SK-N-SH (cell line): ENCODE measurements at regions of chr4 and their contacts with region 1.

Region 1: GRCh38 chr4:109815151-109816081 is at the start of gene GAR1:
- DNase-seq: peak; percentile 88
- H3K4me3 ChIP-seq: peak within 1 kb of the TSS; percentile 91 to 100
- H3K27ac ChIP-seq: peak within 1 kb of the TSS; percentile 88 to 94
- H3K4me1 ChIP-seq: peaks cover 5 to 11% of the 10 kb centered on the region in 2 experiments; a peak in 3 of 4 replicates
- H3K27me3 ChIP-seq: no peaks in the 10 kb centered on the region
- CTCF ChIP-seq: no peak
- EP300 ChIP-seq: peak in 1 of 2 experiments; percentile 28; a peak in 1 of 4 replicates
- RAD21 ChIP-seq: no peak
- polyA plus RNA-seq, gene GAR1: 37.5 and 40.5 TPM in 2 replicates

Region 2: GRCh38 chr4:109826719-109827118 is 11.3 kb after region 1 on chr4:
- CTCF ChIA-PET with region 1: interaction called, 17 read pairs
- POLR2A ChIA-PET with region 1: no interaction called
- DNase-seq: peak; percentile 28
- H3K4me3 ChIP-seq: no peak overlapping the region
- H3K27ac ChIP-seq: no peak overlapping the region
- H3K4me1 ChIP-seq: no peaks in the 10 kb centered on the region
- H3K27me3 ChIP-seq: no peaks in the 10 kb centered on the region
- CTCF ChIP-seq: peak; percentile 76
- EP300 ChIP-seq: no peak
- RAD21 ChIP-seq: peak; percentile 63